ENCODE measurements at regions of chr9 and their contacts with region 1.

Region 1: DNA sequence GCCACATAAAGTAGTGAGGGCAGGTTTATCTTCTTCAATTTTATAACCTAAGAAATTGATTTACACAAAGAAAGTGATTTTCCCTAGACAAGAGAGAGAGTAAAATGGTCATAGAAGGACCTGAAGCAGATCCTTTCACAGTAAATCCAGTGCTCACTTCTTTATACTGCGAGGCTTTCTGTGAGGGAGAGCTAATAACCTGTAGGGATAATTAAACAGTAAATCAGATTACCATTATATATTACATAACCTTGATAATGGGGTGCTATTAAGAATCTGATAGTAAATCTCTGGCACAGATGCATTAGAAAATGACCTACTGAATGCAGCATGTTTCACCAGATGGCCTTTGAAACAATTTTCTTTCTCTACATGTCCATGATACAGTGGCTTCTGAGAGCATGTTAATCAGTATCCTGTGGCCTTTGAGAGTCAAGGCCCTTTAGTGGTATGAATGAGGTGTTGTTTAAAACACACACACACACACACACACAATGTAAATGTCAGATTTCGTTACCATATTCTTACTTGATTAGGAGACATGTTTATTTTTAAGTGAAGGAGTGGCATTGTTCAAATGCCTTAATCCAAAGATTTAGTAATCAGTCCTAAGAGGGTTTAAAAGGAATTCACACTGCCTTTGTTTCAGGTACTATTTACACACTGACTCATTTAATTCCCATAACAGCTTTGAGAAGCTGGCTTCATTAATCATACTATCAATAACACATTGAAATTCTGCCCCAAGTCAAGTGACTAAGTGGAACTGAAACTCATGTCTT is 124.7 kb downstream of the ALDH1A1 start:
- DNase-seq: no peak
- ATAC-seq: no peak
- H3K4me3 ChIP-seq: no peak overlapping the region
- H3K27ac ChIP-seq: peak overlapping the region in 7 of 12 donors; percentile 19 to 82 (median 28)
- H3K4me1 ChIP-seq: peaks cover 0 to 17% (median 0%) of the 10 kb centered on the region in 12 donors
- H3K27me3 ChIP-seq: no peaks in the 10 kb centered on the region
- CTCF ChIP-seq: no peak
- POLR2A ChIP-seq: no peak

Region 2: GRCh38 chr9:72038890-72039410 is 789.2 kb before region 1 on chr9:
- intact Hi-C with region 1: loop called in 7 of 10 experiments (anchors 5 to 10 kb)
- DNase-seq: peak; percentile 64 to 72 (median 71)
- ATAC-seq: peak; percentile 62 to 90 (median 86)
- H3K4me3 ChIP-seq: no peak overlapping the region
- H3K27ac ChIP-seq: no peak overlapping the region
- H3K4me1 ChIP-seq: peaks cover 0 to 9% (median 0%) of the 10 kb centered on the region in 12 donors
- H3K27me3 ChIP-seq: no peaks in the 10 kb centered on the region
- CTCF ChIP-seq: peak; percentile 87 to 99 (median 97)
- POLR2A ChIP-seq: no peak

Region 3: DNA sequence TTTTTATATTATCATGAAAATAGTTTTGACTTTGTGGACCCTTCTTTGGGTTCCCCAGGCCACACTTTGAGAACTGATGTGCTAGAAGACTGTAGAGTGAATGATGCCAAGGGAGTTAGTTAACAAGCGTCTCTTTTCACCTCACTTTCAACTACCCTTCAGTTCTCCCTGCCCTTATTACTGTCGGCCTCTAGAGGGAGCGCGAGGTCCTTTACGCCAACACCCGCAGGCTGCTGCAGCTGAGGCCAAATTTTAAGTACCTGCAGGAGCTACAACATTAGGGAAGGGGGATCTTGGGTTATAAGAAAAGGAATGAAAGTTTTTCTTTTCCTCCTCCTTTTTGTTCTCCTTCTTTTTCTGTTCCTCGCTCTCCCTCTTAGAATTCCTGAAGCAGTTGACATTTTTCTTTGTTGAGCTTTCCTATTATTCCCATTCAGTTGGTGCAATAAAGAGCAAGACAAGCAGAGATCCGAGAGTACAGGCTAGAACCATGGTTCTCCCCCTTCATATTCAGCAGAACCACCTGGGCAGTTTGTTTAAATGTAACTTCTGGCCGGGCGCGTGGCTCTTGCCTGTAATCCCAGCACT is 547.1 kb before region 1 on chr9:
- intact Hi-C with region 1: loop called in 7 of 10 experiments (anchors 5 kb)
- DNase-seq: peak; percentile 60 to 80 (median 66)
- ATAC-seq: peak; percentile 86 to 90 (median 88)
- H3K4me3 ChIP-seq: no peak overlapping the region
- H3K27ac ChIP-seq: no peak overlapping the region
- H3K4me1 ChIP-seq: no peaks in the 10 kb centered on the region
- H3K27me3 ChIP-seq: no peaks in the 10 kb centered on the region
- CTCF ChIP-seq: peak; percentile 85 to 98 (median 90)
- POLR2A ChIP-seq: no peak

Region 4: GRCh38 chr9:72292256-72292682 is 535.9 kb before region 1 on chr9:
- intact Hi-C with region 1: loop called in 1 of 10 experiments (anchors 5 kb)
- DNase-seq: no peak
- ATAC-seq: peak in 1 of 4 donors; percentile 65
- H3K4me3 ChIP-seq: no peak overlapping the region
- H3K27ac ChIP-seq: peak overlapping the region in 1 of 12 donors; percentile 74
- H3K4me1 ChIP-seq: peaks cover 0 to 28% (median 3%) of the 10 kb centered on the region in 12 donors
- H3K27me3 ChIP-seq: no peaks in the 10 kb centered on the region
- CTCF ChIP-seq: peak; percentile 39 to 80 (median 66)
- POLR2A ChIP-seq: no peak

Region 5: GRCh38 chr9:72623156-72623555 is 205.0 kb before region 1 on chr9:
- intact Hi-C with region 1: loop called in 1 of 10 experiments (anchors 10 kb)
- DNase-seq: no peak
- ATAC-seq: no peak
- H3K4me3 ChIP-seq: no peak overlapping the region
- H3K27ac ChIP-seq: no peak overlapping the region
- H3K4me1 ChIP-seq: no peaks in the 10 kb centered on the region
- H3K27me3 ChIP-seq: no peaks in the 10 kb centered on the region
- CTCF ChIP-seq: no peak
- POLR2A ChIP-seq: no peak

Measured in heart left ventricle (tissue), 16 donors.